Activated naive CD4-positive, alpha-beta T cell treated with anti-CD3 and anti-CD28 coated beads for 36 hours (primary cell): ENCODE measurements at regions of chr2 and their contacts with region 1.

Region 1: DNA sequence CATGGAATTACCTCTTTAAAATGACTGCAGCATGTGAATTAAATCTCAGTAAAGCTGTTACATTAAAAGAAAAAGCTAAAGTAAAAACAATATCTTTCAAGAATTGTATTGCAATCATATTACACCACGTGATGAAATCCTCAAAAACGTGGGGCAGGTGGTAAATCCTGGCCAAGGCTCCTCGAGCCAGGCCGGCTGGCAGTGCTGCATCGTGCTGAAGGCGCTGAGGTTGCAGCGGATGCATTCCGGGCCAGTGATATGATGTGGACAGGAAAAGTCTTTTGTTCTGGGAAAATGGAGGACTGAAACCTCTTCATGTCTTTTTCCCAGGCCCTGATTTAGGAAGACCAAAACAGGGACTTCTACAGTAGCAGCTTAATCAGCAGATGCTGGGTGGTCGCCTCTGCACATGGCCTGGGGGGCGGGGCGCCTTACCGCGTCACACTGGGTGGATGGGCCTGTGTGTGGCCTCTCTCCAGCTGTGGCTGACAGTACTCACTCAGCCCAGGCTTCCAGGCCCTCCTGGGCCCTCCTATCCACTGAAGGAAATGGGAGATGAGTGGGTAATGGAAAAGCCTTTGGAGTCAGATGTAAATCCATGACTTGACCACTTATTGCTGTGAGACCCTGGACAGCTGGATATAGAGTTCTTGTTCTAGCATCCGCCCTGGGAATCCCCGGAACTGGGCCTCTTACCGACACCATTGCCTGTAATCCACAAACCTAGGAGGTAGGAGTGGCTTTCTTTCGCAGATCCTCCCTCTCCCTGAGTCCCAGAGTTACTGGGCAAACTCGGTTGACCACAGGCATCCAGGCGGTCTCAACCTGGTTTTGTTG is 45.1 kb downstream of the PROC start:
- DNase-seq: no peak
- H3K4me3 Mint-ChIP-seq: no peak overlapping the region
- H3K27ac Mint-ChIP-seq: no peak overlapping the region
- H3K4me1 Mint-ChIP-seq: peaks cover 15% of the 10 kb centered on the region
- H3K27me3 Mint-ChIP-seq: no peaks in the 10 kb centered on the region

Region 2: DNA sequence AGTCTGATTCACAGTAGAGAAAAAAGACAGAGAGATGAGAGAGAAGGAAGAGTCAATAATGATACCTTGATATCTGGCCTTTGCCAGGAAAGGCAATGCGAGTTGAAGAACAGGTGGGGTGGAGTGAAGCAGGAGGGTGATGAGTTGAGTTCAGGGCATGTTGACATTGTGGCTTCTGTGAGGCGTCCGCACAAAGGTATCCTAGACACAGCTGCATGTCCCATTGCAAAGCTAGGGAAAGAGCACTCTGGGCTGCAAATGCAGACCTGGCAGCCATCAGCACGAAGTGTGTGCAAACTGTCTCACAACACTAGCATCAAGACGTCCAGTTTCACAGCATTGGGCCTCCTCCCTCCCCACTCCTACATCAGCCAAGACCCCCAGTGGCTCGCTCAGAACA is 528.6 kb before region 1 on chr2:
- CTCF ChIA-PET with region 1: no interaction called
- intact Hi-C with region 1: no loop called
- DNase-seq: no peak
- H3K4me3 Mint-ChIP-seq: no peak overlapping the region
- H3K27ac Mint-ChIP-seq: no peak overlapping the region
- H3K4me1 Mint-ChIP-seq: no peaks in the 10 kb centered on the region
- H3K27me3 Mint-ChIP-seq: peaks cover 16% of the 10 kb centered on the region

Region 3: GRCh38 chr2:126986631-126987187 is 476.7 kb before region 1 on chr2:
- CTCF ChIA-PET with region 1: no interaction called
- intact Hi-C with region 1: no loop called
- DNase-seq: no peak
- H3K4me3 Mint-ChIP-seq: no peak overlapping the region
- H3K27ac Mint-ChIP-seq: no peak overlapping the region
- H3K4me1 Mint-ChIP-seq: no peaks in the 10 kb centered on the region
- H3K27me3 Mint-ChIP-seq: peaks cover 18% of the 10 kb centered on the region

Region 4: DNA sequence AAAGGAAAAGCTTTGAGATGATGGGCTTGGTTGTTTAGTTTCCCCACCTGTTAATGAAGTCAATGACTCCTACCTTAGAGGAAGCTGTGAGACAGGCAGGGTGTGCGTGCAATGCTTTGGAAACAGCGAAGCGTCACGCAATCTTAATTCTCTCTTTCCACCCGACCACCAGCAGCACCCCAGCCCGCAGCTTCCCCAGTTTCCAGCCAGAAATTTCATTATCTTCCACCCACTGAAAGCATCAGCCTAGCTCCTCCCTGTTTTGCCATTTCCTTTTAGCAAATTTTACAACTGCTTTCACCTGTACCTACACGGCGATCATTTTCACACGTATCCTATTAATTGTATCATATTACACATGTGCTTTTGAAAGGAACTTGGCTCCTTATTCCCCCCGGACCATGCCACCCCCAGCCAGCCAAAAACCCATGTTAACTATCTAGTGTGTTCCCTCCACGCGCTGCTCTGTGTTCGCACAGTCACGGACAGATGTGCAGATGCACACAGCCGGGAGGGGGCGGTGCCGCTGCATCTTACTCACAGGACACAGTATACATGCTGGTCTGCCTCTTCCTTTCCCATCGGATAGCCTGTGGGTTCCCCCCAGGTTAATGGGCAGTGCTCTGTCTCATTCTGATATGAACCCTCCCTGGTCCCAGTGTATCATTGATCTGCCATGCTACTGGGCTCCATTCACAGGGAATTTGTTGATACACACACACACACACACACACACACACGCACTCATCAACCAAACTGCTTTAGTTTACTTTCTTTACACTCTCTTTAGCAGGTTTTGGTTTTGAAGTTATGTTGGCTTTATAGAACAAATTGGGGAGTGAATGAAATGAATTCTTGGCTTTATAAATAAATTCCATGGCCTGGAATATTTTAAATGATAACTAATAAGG is 265.6 kb before region 1 on chr2:
- CTCF ChIA-PET with region 1: no interaction called
- intact Hi-C with region 1: loop called (anchors 5 kb)
- DNase-seq: peak; percentile 80
- H3K4me3 Mint-ChIP-seq: peak overlapping the region; percentile 69
- H3K27ac Mint-ChIP-seq: no peak overlapping the region
- H3K4me1 Mint-ChIP-seq: peaks cover 5% of the 10 kb centered on the region
- H3K27me3 Mint-ChIP-seq: no peaks in the 10 kb centered on the region

Region 5: DNA sequence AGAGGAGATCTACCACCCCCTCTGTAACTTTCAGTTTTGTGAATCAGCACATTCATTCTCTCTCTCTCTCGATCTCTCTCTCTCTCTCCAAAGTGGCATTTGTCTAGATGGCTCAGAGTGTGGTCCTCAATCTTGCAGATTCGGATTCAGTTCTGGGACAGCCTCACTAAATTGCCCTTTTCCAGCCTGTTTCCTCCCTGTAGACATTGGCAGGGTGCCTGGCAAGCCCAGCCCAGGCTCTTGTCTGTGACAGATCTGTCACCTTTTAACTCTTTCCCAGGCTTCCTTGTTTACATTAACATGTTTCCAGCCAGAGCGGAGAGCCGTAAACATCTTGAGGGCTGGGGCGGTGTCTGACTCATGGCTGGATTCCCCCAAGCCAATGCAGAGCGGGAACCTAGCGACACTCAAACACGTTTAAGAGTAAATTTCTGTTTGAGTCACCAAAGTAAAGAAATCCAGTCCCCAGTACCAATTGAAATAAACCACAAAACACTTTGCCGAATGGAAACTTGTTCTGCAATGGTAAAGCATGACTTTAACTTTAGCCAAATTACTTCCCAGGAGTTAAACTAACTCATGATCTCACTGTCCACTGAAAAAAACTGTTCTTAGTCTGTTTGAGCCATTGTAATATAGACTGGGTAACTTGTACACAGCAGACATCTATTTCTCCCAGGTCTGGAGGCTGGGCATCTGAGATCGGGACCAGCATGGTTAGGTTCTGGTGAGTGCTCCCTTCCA is 236.7 kb before region 1 on chr2:
- CTCF ChIA-PET with region 1: no interaction called
- intact Hi-C with region 1: no loop called
- DNase-seq: peak; percentile 57
- H3K4me3 Mint-ChIP-seq: no peak overlapping the region
- H3K27ac Mint-ChIP-seq: no peak overlapping the region
- H3K4me1 Mint-ChIP-seq: no peaks in the 10 kb centered on the region
- H3K27me3 Mint-ChIP-seq: peaks cover 21% of the 10 kb centered on the region

Region 6: DNA sequence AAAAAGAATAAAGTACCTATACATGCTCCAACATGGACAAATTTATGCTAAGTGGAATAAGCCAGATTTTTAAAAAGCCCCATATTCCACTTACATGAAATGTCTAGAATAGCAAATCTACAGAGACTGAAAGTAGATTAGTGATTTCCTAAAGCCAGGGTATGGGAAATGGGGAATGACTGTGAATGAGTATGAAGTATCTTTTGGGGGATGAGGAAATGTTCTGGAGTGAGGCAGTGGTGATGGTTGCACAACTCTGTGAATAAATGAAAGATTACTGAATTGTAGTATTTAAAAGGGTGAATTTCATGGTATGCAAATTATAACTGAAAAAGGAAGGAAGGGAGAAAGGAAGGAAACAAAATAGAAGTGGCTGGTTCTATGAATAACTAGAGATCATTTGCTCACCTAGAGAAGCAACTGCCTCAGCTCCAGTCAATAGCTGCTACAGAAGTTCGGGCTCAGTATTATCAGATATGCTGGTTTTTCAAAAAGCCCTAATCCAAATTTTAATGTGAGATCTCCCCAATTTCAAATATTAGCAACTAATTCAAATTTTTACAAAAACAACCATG is 114.9 kb before region 1 on chr2:
- CTCF ChIA-PET with region 1: no interaction called
- intact Hi-C with region 1: no loop called
- DNase-seq: no peak
- H3K4me3 Mint-ChIP-seq: no peak overlapping the region
- H3K27ac Mint-ChIP-seq: no peak overlapping the region
- H3K4me1 Mint-ChIP-seq: peaks cover 55% of the 10 kb centered on the region
- H3K27me3 Mint-ChIP-seq: no peaks in the 10 kb centered on the region